Dendritic cell treated with granulocyte-macrophage colony-stimulating factor and Interleukin-4, amounts not matched to agents 40 ng/mL and 50 ng/mL, for 4 days (primary cell): ENCODE measurements at regions of chr5 and their contacts with region 1.

Region 1: DNA sequence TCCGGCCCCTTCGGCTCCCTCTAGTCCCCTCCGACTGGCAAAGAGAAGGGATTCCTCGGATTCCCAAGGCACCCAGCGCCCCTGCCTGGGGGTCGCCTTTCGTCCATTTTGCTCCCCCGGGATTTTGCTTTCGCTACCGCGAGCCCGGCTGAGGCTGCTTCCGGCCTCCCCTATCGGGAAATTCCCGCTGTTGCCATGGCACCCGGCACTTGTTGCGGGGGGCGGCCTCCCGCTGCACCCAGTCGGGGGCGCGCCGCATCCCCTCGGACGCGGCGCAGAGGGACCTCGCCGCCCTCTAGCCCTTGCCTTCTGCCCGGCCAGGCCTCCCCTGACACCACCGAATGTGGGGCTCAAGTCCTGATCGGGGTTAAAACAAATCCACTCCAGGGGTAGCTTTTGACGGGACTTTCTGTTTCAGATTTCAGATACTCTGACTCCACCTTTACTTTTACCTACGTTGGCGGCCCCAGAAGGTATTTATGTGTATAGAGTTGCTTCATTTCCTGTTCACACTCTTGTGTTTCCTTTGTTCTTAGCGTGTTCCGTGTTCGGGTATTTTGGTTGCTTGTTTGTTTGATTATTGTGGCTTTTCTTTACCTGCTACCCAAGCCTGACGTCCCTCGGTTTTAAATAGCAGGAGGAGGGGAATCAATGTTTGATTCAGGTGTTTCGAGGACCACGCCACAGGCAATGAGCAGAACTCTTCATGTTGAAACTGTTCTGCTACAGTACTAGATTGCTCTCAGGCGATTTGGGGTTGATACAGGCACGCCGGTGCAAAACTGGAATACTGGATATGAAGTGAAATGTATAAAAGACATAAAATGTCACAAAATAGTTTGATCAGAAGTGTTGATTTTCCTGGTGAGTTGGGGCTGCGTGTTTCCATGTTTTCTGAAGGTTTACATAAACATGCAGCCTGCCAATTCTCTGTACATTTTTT is 1.5 kb downstream of the PARP8 start:
- H3K4me3 Mint-ChIP-seq: peak overlapping the region; percentile 94
- H3K27ac Mint-ChIP-seq: peak overlapping the region; percentile 95
- H3K4me1 Mint-ChIP-seq: peaks cover 49% of the 10 kb centered on the region
- H3K27me3 Mint-ChIP-seq: no peaks in the 10 kb centered on the region

Region 2: GRCh38 chr5:50440651-50441492 is 227.1 kb before region 1 on chr5 and contains the start of gene EMB:
- intact Hi-C with region 1: loop called (anchors 5 kb)
- H3K4me3 Mint-ChIP-seq: peak within 1 kb of the TSS; percentile 87
- H3K27ac Mint-ChIP-seq: peak within 1 kb of the TSS; percentile 91
- H3K4me1 Mint-ChIP-seq: peaks cover 50% of the 10 kb centered on the region
- H3K27me3 Mint-ChIP-seq: no peaks in the 10 kb centered on the region

Region 3: DNA sequence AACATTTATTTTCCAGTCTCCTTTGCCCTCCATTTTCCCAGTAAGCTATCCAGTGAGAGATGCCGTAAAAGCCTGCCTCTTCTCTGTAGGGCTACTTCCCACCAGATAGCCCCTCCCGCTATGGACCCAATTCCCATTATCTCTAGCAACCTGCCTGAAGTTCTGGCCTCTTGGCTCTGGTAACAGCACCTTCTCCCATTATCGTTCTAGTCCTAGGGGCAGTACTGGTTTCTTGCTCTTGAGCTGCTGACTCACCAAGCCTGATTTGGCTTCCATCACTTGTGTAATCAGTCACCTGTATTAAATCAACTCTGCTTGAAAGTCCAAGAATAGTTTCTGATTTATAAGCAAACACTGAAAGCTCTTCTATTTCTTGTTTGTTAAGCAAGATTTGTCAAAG is 44.3 kb before region 1 on chr5:
- intact Hi-C with region 1: loop called (anchors 10 kb)
- H3K4me3 Mint-ChIP-seq: no peak overlapping the region
- H3K27ac Mint-ChIP-seq: no peak overlapping the region
- H3K4me1 Mint-ChIP-seq: peaks cover 7% of the 10 kb centered on the region
- H3K27me3 Mint-ChIP-seq: peaks cover 4% of the 10 kb centered on the region

Region 4: GRCh38 chr5:50697421-50698138 is 29.7 kb after region 1 on chr5:
- intact Hi-C with region 1: no loop called
- H3K4me3 Mint-ChIP-seq: no peak overlapping the region
- H3K27ac Mint-ChIP-seq: no peak overlapping the region
- H3K4me1 Mint-ChIP-seq: peaks cover 43% of the 10 kb centered on the region
- H3K27me3 Mint-ChIP-seq: no peaks in the 10 kb centered on the region

Region 5: GRCh38 chr5:50744776-50745175 is 76.9 kb after region 1 on chr5:
- intact Hi-C with region 1: loop called (anchors 5 kb)
- H3K4me3 Mint-ChIP-seq: peak overlapping the region; percentile 75
- H3K27ac Mint-ChIP-seq: peak overlapping the region; percentile 72
- H3K4me1 Mint-ChIP-seq: peaks cover 56% of the 10 kb centered on the region
- H3K27me3 Mint-ChIP-seq: no peaks in the 10 kb centered on the region